CD14-positive monocyte (primary cell): ENCODE measurements at regions of chr11 and their contacts with region 1.

Region 1: GRCh38 chr11:125111343-125112207 is at the start of gene TMEM218:
- DNase-seq: peak; percentile 99 to 100 (median 100)
- H3K4me3 ChIP-seq: peak within 1 kb of the TSS; percentile 86 to 93 (median 90)
- H3K4me3 Mint-ChIP-seq: peak within 1 kb of the TSS; percentile 86 to 96
- H3K27ac ChIP-seq: peak within 1 kb of the TSS; percentile 86 to 88
- H3K27ac Mint-ChIP-seq: peak within 1 kb of the TSS; percentile 89 to 99 (median 96)
- H3K4me1 ChIP-seq: peaks cover 17 to 19% of the 10 kb centered on the region in 2 donors
- H3K4me1 Mint-ChIP-seq: peaks cover 17% of the 10 kb centered on the region
- H3K27me3 ChIP-seq: no peaks in the 10 kb centered on the region
- H3K27me3 Mint-ChIP-seq: peaks cover 0 to 5% (median 3%) of the 10 kb centered on the region in 3 donors
- CTCF ChIP-seq: no peak
- polyA plus RNA-seq, gene TMEM218: 40.3 to 57.7 (median 55.7) TPM

Region 2: DNA sequence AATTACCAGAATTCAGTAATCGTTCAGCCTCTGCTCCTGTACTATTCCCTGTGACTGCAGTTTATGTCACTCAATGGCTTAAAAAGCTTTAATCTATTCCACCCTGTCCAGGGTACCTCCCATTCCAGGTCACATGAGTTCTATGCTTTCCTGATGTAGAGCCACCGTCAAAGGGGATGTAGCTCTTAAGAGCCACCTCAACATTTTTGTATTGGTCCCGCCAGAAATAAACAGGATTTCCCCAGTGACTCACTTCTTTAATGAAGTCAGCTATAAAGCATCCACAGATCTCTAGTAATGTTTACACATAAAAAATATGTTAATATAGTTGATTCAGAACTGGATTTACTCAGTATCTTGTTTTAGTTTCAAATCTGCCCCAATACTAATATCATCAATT is 796.5 kb before region 1 on chr11:
- intact Hi-C with region 1: no loop called
- DNase-seq: no peak
- H3K4me3 ChIP-seq: no peak overlapping the region
- H3K4me3 Mint-ChIP-seq: no peak overlapping the region
- H3K27ac ChIP-seq: no peak overlapping the region
- H3K27ac Mint-ChIP-seq: no peak overlapping the region
- H3K4me1 ChIP-seq: no peaks in the 10 kb centered on the region
- H3K4me1 Mint-ChIP-seq: no peaks in the 10 kb centered on the region
- H3K27me3 ChIP-seq: no peaks in the 10 kb centered on the region
- H3K27me3 Mint-ChIP-seq: peaks cover 0 to 2% (median 1%) of the 10 kb centered on the region in 3 donors
- CTCF ChIP-seq: no peak

Region 3: GRCh38 chr11:125070699-125071254 is 40.8 kb before region 1 on chr11:
- intact Hi-C with region 1: loop called in 1 of 2 experiments (anchors 5 kb)
- DNase-seq: peak; percentile 97 to 99 (median 98)
- H3K4me3 ChIP-seq: peak overlapping the region in 1 of 3 experiments; percentile 33
- H3K4me3 Mint-ChIP-seq: peak overlapping the region; percentile 6 to 76
- H3K27ac ChIP-seq: peak overlapping the region; percentile 98 to 99
- H3K27ac Mint-ChIP-seq: peak overlapping the region; percentile 99 to 100 (median 99)
- H3K4me1 ChIP-seq: peaks cover 90 to 96% of the 10 kb centered on the region in 2 donors
- H3K4me1 Mint-ChIP-seq: peaks cover 90% of the 10 kb centered on the region
- H3K27me3 ChIP-seq: no peaks in the 10 kb centered on the region
- H3K27me3 Mint-ChIP-seq: peaks cover 0 to 5% (median 5%) of the 10 kb centered on the region in 3 donors
- CTCF ChIP-seq: no peak

Region 4: GRCh38 chr11:125270711-125271110 is 159.1 kb after region 1 on chr11:
- intact Hi-C with region 1: no loop called
- DNase-seq: no peak
- H3K4me3 ChIP-seq: no peak overlapping the region
- H3K4me3 Mint-ChIP-seq: no peak overlapping the region
- H3K27ac ChIP-seq: no peak overlapping the region
- H3K27ac Mint-ChIP-seq: no peak overlapping the region
- H3K4me1 ChIP-seq: no peaks in the 10 kb centered on the region
- H3K4me1 Mint-ChIP-seq: no peaks in the 10 kb centered on the region
- H3K27me3 ChIP-seq: no peaks in the 10 kb centered on the region
- H3K27me3 Mint-ChIP-seq: peaks cover 7 to 12% (median 8%) of the 10 kb centered on the region in 3 donors
- CTCF ChIP-seq: no peak